ENCODE measurements at regions of chr12 and their contacts with region 1.

Region 1: DNA sequence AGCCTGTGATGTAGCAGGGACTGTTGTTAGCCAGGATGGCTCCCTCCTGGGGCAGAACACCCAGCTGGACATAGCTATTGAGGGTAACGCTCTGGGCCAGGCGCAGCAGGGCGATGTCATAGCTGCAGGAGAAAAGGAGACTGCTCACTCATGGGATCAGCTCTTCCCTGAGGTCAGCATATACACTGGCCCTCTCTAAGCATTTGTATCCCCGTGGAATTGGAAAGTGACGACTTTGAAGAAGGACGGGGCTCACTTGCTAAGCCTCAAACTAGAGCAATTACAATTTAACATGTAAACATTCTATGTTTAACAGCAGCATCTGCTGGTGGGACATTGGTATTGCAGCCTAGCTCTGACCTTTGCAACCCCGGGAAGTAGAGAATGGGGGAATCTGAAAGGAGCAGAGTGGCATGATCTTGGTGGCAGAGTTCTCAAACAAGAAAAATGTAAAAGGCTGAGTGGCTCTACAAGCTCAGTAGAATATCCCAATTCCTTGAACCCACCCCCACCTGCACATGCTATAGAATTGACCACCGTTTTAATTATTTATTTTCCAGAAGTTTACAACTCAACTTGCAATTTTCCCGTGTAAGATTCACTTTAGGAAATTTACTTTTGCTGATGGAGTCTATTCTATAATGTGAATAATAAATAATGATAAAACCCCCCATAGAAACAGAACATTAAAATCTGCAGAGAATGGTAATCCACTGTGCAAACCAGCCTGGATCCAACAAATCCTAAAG is 5.0 kb downstream of the CELA1 start:
- DNase-seq: peak; percentile 88
- H3K4me3 Mint-ChIP-seq: no peak overlapping the region
- H3K27ac Mint-ChIP-seq: no peak overlapping the region
- H3K4me1 Mint-ChIP-seq: peaks cover 18% of the 10 kb centered on the region
- H3K27me3 Mint-ChIP-seq: no peaks in the 10 kb centered on the region

Region 2: GRCh38 chr12:50763639-50764285 is 577.7 kb before region 1 on chr12 and contains the start of gene ATF1:
- CTCF ChIA-PET with region 1: interaction called, 3 read pairs
- intact Hi-C with region 1: loop called (anchors 1 kb)
- DNase-seq: peak; percentile 91
- H3K4me3 Mint-ChIP-seq: peak within 1 kb of the TSS; percentile 83
- H3K27ac Mint-ChIP-seq: peak within 1 kb of the TSS; percentile 94
- H3K4me1 Mint-ChIP-seq: peaks cover 33% of the 10 kb centered on the region
- H3K27me3 Mint-ChIP-seq: no peaks in the 10 kb centered on the region
- total RNA-seq, gene ATF1: 43.3 to 48.5 TPM

Region 3: GRCh38 chr12:51047655-51048540 is 293.5 kb before region 1 on chr12 and contains the start of gene LETMD1:
- CTCF ChIA-PET with region 1: interaction called, 5 read pairs
- intact Hi-C with region 1: loop called (anchors 1 kb)
- DNase-seq: peak; percentile 95
- H3K4me3 Mint-ChIP-seq: peak within 1 kb of the TSS; percentile 93
- H3K27ac Mint-ChIP-seq: peak within 1 kb of the TSS; percentile 93
- H3K4me1 Mint-ChIP-seq: peaks cover 34% of the 10 kb centered on the region
- H3K27me3 Mint-ChIP-seq: no peaks in the 10 kb centered on the region
- total RNA-seq, gene LETMD1: 88.7 to 89.0 TPM

Region 4: DNA sequence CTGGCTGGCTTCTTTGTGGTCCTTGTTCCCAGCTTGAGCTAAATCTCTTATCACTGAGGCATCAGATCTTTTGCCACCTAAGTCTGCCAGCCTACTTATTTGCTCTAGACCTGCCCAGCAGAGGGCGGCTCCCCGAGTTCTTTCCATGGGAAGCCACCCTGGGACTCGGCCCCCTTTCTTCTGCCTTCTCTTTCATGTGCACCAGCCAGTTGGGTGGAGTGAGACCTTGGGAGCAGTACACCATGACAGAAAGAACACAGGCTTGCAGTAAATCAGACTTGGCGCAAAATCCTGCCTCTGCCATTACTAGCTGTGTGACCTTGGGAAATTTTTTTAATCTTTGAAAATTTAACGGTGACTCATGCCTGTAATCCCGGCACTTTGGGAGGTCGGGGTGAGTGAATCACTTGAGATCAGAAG is 78.7 kb before region 1 on chr12:
- CTCF ChIA-PET with region 1: interaction called, 86 read pairs
- intact Hi-C with region 1: no loop called
- DNase-seq: peak; percentile 52
- H3K4me3 Mint-ChIP-seq: no peak overlapping the region
- H3K27ac Mint-ChIP-seq: peak overlapping the region; percentile 8
- H3K4me1 Mint-ChIP-seq: peaks cover 18% of the 10 kb centered on the region
- H3K27me3 Mint-ChIP-seq: no peaks in the 10 kb centered on the region

Region 5: GRCh38 chr12:51307655-51308593 is 33.5 kb before region 1 on chr12:
- CTCF ChIA-PET with region 1: interaction called, 10 read pairs
- intact Hi-C with region 1: loop called (anchors 1 kb)
- DNase-seq: no peak
- H3K4me3 Mint-ChIP-seq: no peak overlapping the region
- H3K27ac Mint-ChIP-seq: peak overlapping the region; percentile 15
- H3K4me1 Mint-ChIP-seq: peaks cover 57% of the 10 kb centered on the region
- H3K27me3 Mint-ChIP-seq: no peaks in the 10 kb centered on the region

Measured in activated naive CD4-positive, alpha-beta T cell treated with anti-CD3 and anti-CD28 coated beads for 36 hours (primary cell).